Activated CD4-positive, alpha-beta T cell treated with anti-CD3 and anti-CD28 coated beads, Interleukin-2, amount 10 ng/mL, durations not matched to agents 24 days and 14 days (primary cell): ENCODE measurements at regions of chr16 and their contacts with region 1.

Region 1: DNA sequence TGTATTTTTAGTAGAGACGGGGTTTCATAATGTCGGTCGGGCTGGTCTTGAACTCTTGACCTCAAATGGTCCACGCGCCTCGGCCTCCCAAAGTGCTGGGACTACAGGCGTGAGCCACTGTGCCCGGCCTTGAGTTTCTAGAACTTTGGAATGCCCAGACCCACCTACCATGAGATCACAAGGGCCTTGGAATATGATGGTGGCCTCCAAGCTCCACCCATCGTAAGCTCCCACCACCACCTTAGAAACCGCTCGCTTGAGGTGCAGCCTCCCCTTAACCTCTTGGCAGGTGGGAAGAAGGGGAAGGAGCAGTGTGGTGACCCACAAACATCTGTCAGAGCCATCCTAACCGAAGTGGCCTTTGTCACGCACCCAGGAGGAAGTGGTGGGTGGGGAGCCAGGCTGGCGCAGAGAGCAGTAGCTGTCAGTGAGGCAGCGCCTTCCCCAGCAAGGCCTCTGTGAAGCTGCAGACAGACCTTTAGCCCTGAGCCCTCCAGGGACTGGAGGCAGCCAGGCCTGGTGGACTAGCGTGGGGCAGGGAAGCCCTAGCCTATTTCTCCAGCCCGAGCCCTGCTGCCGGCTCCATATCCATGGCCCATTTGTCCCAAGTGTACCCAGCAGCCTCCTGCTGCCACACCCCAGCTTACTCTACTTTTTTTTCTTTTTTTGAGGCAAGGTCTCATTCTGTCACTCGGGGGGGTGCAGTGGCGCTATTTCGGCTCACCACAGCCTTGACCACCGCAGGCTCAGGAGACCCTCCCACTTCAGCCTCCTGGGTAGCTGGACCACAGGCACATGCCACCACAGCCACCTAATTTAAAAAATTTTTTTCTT is 13.1 kb upstream of the SEPHS2 start:
- DNase-seq: peak; percentile 96
- H3K4me3 Mint-ChIP-seq: peak overlapping the region; percentile 75
- H3K27ac Mint-ChIP-seq: peak overlapping the region; percentile 95
- H3K4me1 Mint-ChIP-seq: peaks cover 68% of the 10 kb centered on the region
- H3K27me3 Mint-ChIP-seq: no peaks in the 10 kb centered on the region

Region 2: DNA sequence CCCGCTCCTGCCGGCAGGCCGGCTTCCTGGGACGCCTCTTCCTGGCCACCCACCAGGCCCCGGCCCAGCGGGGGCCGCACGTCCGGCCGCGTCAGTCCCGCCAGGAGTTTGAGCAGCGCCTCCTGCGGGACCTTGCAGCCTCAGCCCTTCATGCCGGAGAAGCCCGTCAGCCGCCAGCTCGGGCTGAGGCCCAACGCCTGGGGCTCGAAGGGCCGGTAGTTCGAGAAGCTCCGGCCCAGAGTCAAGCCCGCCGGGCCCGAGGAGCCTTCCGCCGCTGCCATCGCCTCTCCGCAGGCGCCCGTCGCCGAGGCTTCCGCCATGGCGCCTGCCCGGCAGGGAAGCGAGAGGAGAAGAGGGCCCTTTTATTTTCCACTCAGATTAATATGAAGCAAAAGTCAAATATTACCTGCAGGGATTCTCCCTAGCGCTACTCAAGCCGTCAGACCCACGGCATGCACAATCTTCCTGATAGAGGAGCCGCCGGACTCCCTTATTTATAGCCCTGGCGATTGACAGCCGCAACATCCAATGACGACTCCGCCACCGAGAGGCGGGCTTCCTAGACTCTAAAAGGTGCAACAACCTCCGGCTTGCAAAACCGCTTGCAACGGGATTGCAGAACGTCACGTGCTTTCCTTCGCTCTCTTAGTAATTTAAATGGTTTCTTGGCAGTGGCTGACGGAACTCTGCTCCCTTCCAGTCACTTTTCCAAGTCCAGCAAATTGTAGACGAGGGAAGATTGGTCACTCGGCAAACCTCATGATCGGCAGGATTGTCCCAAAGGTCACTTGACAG is 13.2 kb before region 1 on chr16 and contains the start of gene SEPHS2:
- intact Hi-C with region 1: loop called (anchors 1 kb)
- DNase-seq: peak; percentile 99
- H3K4me3 Mint-ChIP-seq: peak within 1 kb of the TSS; percentile 89
- H3K27ac Mint-ChIP-seq: peak within 1 kb of the TSS; percentile 93
- H3K4me1 Mint-ChIP-seq: peaks cover 34% of the 10 kb centered on the region
- H3K27me3 Mint-ChIP-seq: no peaks in the 10 kb centered on the region
- total RNA-seq, gene SEPHS2: 79.7 and 80.2 TPM in 2 replicates